HAP-1 (cell line): ENCODE measurements at regions of chr12 and their contacts with region 1.

Region 1: DNA sequence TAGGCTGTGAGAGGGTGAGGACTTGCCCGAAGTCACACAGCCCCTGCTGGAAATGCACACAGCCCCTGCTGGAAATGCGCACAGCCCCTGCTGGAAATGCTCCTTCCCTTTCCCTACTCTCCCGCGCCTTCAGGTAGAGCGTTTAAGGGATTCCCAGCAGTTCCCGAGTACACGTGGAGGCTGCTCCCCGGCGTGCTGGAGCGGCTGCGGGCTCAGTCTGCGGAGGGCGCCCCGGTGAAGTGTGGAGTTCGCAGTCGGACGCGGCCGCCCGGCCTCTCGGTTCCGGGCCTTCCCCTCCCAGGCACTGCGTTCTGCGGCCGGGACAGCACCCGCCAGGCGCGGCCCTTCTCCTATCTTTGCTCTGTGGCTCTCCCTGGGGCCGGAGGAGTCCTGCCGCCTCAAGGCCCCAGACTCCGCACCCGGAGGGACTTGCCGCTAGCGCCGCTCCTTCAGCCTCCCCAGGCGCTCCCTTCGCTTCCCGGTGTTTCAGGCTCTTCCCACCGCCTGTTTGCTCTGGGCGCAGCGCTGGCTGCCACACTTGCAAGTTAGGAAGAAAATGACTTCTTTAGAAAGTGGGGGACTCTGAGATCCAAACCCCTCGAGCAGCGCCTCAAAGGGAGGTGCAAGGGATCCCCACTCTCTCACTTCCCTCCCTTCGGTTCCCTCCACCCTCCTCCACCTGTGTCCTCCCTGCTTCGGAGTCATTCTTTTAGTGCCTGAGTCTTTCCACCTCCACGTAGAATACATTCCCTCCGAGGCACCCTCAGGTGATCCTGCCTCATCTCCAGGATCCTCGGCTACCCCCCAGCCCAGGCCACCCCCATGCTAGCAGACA is 8.3 kb upstream of the TBX5 start:
- DNase-seq: no peak
- H3K4me3 ChIP-seq: no peak overlapping the region
- H3K4me1 ChIP-seq: peaks cover 21% of the 10 kb centered on the region
- H3K27me3 ChIP-seq: no peaks in the 10 kb centered on the region

Region 2: DNA sequence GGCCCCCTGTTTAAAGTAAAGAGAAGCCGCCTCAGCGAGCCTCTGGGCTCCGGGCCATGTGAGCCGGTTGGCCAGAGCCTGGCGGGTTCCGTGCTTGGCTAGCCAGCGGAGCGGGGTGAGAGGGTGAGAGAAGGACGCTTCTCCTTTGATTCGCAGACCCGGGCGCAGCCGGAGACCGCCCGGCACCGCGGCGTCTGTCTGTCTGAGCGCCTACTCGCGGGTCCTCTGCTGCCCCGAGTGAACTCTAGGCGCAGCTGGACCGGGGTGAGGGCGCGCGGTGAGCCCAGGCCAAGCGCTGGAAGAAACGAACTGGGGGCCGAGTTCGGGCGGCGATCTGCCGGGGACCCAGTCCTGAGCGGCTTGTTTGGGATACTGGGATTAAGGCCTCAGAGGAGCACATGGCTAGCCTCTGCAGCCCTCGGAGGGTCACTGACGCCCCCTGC is 33.0 kb after region 1 on chr12:
- in situ Hi-C with region 1: loop called (anchors 5 kb)
- DNase-seq: peak in 1 of 2 experiments; percentile 61
- H3K4me3 ChIP-seq: no peak overlapping the region; the same call in 1 of the 2 replicates
- H3K4me1 ChIP-seq: peaks cover 59% of the 10 kb centered on the region
- H3K27me3 ChIP-seq: no peaks in the 10 kb centered on the region

Region 3: GRCh38 chr12:114491916-114492315 is 77.7 kb after region 1 on chr12:
- in situ Hi-C with region 1: no loop called
- DNase-seq: no peak
- H3K4me3 ChIP-seq: no peak overlapping the region
- H3K4me1 ChIP-seq: no peaks in the 10 kb centered on the region
- H3K27me3 ChIP-seq: peaks cover 15% of the 10 kb centered on the region